ENCODE measurements at regions of chr16 and their contacts with region 1.

Region 1: DNA sequence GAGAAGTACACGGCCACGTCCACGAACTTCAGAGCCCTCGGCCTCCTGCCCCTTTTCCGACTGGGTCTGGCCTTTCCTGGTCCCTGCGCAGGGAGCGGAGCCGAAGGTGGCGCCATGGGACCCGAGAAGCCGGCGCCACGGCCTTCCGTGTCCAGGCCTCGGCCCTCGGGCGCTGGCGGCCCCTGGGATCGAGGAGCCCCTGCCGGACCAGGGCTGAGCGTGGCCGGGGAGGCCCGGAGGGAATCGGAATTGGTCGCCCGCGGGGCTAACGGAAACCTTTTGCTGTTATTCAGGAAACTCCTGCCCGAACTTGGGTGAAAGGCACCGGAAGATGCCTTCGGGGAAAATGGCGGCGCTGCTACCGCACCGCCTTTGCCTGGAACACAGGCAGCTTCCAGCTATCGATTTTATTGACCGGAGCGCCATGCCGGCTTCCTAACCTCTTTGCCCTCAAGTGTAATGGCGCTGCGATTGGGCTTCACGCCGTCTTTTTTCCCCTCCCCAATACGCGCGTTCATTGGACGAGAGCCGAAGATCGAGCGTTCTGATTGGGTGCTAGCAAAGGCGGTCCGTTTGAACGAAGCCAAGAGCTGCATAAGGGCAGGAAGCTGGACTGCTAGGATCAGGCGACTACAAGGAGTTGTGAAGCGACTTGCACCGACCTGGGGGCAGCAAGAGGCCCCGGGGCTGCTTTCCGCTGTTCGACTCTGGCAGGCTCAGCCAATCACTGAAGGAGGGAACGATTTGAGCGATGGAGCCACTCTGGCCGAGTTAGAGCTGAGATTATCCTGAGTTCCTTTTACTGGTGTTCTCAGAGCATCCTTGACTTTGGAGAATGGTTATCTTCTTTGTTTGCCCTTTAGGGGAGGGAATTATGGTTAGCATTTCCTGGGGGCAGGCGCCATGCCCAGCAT is at the start of gene ZNF689:
- DNase-seq: peak; percentile 94
- ATAC-seq: peak; percentile 100
- H3K4me3 ChIP-seq: peak within 1 kb of the TSS; percentile 80 to 100 (median 98)
- H3K27ac ChIP-seq: peak within 1 kb of the TSS; percentile 91 to 99 (median 94)
- H3K4me1 ChIP-seq: no peaks in the 10 kb centered on the region
- H3K27me3 ChIP-seq: no peaks in the 10 kb centered on the region
- CTCF ChIP-seq: no peak
- POLR2A ChIP-seq: peak in 1 of 2 donors; percentile 45
- total RNA-seq, gene ZNF689: 2.9 to 6.3 (median 6.1) TPM

Region 2: GRCh38 chr16:30650369-30651123 is 40.4 kb after region 1 on chr16 and contains the start of gene PRR14:
- in situ Hi-C with region 1: no loop called
- intact Hi-C with region 1: loop called (anchors 1 kb)
- DNase-seq: peak; percentile 100
- ATAC-seq: peak; percentile 90 to 91
- H3K4me3 ChIP-seq: peak within 1 kb of the TSS; percentile 83 to 96 (median 93)
- H3K27ac ChIP-seq: peak within 1 kb of the TSS; percentile 94 to 99 (median 98)
- H3K4me1 ChIP-seq: peaks cover 6 to 18% of the 10 kb centered on the region in 2 donors
- H3K27me3 ChIP-seq: no peaks in the 10 kb centered on the region
- CTCF ChIP-seq: peak in 4 of 5 experiments; percentile 38 to 69 (median 48)
- POLR2A ChIP-seq: peak in 1 of 2 donors; percentile 74
- total RNA-seq, gene PRR14: 8.8 to 28.4 (median 17.8) TPM